Astrocyte of the cerebellum (primary cell): ENCODE measurements at regions of chr20 and their contacts with region 1.

Region 1: GRCh38 chr20:44552950-44553908 is 29.1 kb upstream of the PKIG start:
- DNase-seq: peak; percentile 62
- H3K4me3 ChIP-seq: no peak overlapping the region
- CTCF ChIP-seq: no peak

Region 2: GRCh38 chr20:43669332-43669731 is 883.9 kb before region 1 on chr20:
- in situ Hi-C with region 1: no loop called
- DNase-seq: no peak
- H3K4me3 ChIP-seq: no peak overlapping the region
- CTCF ChIP-seq: no peak

Region 3: GRCh38 chr20:44594730-44595129 is 41.5 kb after region 1 on chr20:
- in situ Hi-C with region 1: loop called (anchors 5 kb)
- DNase-seq: no peak
- H3K4me3 ChIP-seq: no peak overlapping the region
- CTCF ChIP-seq: no peak

Region 4: DNA sequence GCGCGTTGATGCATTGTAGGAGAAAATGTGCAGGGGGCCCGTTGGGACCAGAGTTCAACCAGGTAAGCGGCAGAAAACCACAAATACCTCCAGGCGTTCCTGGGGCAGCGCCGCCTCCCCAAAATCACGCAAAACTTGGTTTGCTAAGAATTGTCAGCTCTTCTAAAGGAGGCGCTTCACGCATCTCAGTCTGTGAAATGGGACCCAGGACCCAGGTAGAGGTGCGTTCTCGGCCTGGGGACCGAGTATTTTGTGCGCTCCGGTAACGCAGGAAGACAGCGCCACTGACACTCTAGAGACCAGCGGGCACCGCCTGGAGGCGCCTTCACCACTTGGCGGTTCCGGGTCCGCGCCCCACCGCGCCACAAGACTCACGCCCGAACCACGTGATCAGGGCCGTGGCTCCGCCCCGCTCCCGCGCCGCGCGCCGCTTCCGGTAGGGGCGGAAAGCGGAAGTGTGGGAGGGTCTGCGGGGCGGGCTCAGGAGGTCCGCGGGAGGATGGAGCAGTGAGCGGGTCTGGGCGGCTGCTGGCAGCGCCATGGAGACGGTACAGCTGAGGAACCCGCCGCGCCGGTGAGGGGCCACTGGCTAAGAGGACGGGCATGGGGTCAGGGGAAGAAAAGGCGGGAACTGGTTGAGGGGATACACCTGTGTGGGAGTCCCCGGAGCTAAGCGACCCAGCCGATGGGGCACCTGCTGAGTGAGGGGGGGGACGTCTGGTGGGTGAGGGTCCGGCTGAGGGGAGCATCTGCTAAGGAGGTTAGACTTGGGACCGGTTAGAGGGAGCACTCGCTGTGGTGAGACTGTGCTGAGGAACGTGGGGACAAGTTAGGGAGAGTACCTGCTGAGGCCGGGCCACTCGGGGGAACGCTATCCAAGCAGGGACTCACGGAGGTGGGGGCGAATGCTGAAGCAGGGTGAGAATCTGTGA is 413.1 kb after region 1 on chr20 and contains the start of gene STK4:
- in situ Hi-C with region 1: no loop called
- DNase-seq: peak; percentile 68
- H3K4me3 ChIP-seq: peak within 1 kb of the TSS; percentile 97
- CTCF ChIP-seq: peak; percentile 45